HepG2 (cell line): ENCODE measurements at regions of chr17 and their contacts with region 1.

Region 1: GRCh38 chr17:77319211-77320043 is 178.7 kb downstream of the SEC14L1 start:
- DNase-seq: no peak
- ATAC-seq: no peak
- H3K4me3 ChIP-seq: no peak overlapping the region
- H3K27ac ChIP-seq: no peak overlapping the region
- H3K4me1 ChIP-seq: peaks cover 52% of the 10 kb centered on the region
- H3K27me3 ChIP-seq: no peaks in the 10 kb centered on the region
- CTCF ChIP-seq: no peak
- EP300 ChIP-seq: no peak
- POLR2A ChIP-seq: no peak
- RAD21 ChIP-seq: no peak

Region 2: DNA sequence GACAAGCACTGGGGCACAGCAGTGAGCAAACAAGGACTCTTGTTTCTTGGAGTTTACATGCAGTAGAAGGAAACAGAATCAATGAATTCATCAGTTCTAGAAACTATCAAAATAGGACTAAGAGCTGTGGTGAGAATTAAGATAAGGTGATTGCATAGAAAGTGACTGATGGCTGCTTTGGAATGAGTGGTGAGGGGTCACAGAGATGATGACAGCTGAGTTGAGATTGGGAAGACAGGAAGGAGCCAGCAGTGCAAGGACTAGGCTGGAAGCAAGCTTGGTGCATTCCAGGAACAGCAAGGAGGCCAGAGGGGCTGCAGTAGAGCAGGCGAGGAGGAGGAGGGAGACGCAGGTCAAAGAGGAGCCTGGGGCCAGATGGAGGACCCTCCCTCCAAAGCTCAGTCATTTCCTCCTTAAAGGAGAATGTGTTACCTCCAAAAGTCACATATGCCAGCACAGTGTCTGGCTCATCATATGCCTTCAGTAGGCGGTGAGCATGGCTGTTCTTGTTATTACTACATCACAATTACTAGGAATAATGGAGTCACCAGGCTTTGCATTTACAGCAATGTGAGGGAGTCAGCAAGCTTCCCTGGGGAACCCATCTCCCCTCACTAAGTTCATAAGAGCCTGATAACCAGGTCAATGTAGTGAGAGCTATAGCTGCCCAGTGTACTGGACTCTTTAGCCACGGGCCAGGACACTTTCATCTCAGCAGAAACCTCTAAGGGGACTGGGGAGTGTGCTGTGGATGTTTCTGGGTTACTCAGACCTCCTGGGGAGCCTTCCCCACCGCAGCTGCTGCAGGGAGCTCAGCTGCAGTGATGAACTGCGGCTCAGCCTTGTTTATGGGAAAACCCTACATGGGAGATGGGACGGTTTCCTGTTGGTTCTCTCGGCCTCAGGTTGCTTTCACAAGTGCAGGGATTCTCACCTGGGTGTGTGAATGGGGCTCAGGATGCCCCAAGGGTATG is 21.4 kb before region 1 on chr17:
- CTCF ChIA-PET with region 1: no interaction called
- POLR2A ChIA-PET with region 1: interaction called, 13 read pairs
- in situ Hi-C with region 1: no loop called
- intact Hi-C with region 1: no loop called
- DNase-seq: no peak
- ATAC-seq: no peak
- H3K4me3 ChIP-seq: no peak overlapping the region
- H3K27ac ChIP-seq: peak overlapping the region; percentile 50
- H3K4me1 ChIP-seq: peaks cover 81% of the 10 kb centered on the region
- H3K27me3 ChIP-seq: no peaks in the 10 kb centered on the region
- CTCF ChIP-seq: no peak
- EP300 ChIP-seq: no peak
- POLR2A ChIP-seq: 0 out of 4 replicates have a peak, but pooled peaks of 1 of the 2 experiments have one; percentile 13
- RAD21 ChIP-seq: no peak